Activated B cell treated with CpG ODN at 0.5 μM for 24 hours (primary cell): ENCODE measurements at regions of chr7 and their contacts with region 1.

Region 1: GRCh38 chr7:143214789-143215679 is 6.8 kb upstream of the TAS2R40 start:
- DNase-seq: no peak
- ATAC-seq: peak; percentile 97
- H3K4me3 Mint-ChIP-seq: no peak overlapping the region
- H3K27ac Mint-ChIP-seq: no peak overlapping the region
- H3K4me1 Mint-ChIP-seq: peaks cover 16% of the 10 kb centered on the region
- H3K27me3 Mint-ChIP-seq: peaks cover 2% of the 10 kb centered on the region
- CTCF ChIP-seq: peak; percentile 99

Region 2: DNA sequence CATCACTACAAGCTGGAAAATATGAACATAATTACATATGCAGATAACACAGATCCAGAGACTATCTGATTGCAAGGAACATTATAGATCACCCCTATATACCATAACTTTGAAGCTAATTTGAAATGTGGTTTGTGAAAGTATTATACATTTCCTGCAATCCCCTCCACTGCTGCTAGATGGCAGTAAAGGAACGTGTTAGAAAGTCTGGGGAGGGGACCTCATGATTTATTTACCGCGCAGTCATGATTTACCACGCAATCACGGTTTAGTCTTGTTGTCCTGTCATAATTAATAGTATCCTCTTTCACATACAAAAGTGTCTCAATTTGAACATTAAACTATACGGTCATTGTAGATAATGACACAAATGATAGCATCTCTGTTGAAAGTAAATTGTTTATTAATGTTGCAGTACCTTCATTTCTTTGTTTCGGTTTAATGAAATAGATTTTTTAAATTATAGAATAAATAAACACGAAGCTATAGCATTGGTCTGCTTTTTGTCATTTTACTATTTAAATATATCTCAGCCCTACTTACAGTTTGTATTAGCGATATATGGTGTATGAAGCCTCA is 611.1 kb before region 1 on chr7:
- CTCF ChIA-PET with region 1: interaction called, 12 read pairs
- POLR2A ChIA-PET with region 1: no interaction called
- intact Hi-C with region 1: loop called (anchors 2 kb)
- DNase-seq: no peak
- ATAC-seq: no peak
- H3K4me3 Mint-ChIP-seq: no peak overlapping the region
- H3K27ac Mint-ChIP-seq: no peak overlapping the region
- H3K4me1 Mint-ChIP-seq: peaks cover 3% of the 10 kb centered on the region
- H3K27me3 Mint-ChIP-seq: peaks cover 35% of the 10 kb centered on the region
- CTCF ChIP-seq: peak; percentile 64

Region 3: DNA sequence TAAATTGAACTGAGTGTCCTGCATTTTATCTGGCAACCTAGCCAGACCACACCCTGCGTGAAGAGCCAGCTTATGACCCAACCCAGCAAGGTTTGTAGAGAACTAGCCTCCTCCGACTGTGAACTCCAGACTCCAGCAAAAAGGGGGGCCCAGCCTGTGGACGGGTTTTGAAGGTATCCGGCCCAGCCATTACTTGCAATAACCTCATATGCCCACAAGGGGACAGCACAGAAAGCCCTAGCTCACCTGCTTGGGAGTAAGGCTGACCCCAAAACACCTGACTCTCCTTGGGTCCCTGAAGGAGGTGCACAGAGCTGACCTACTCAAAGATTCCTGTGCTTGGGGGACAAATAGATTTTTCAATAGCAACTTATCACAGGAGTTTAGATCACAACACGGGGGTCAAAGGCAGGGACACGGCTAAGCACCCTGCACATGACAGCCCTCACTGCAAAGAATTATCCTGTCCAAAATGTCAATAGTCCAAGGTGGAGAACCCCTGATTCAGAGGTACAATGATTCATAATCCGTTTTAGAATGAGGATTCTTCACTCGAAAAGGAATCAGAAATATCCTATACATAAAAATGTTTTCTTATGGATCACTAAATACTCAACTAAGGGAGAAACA is 334.0 kb before region 1 on chr7:
- CTCF ChIA-PET with region 1: interaction called, 29 read pairs
- POLR2A ChIA-PET with region 1: no interaction called
- intact Hi-C with region 1: loop called (anchors 1 kb)
- DNase-seq: no peak
- ATAC-seq: peak; percentile 79
- H3K4me3 Mint-ChIP-seq: no peak overlapping the region
- H3K27ac Mint-ChIP-seq: no peak overlapping the region
- H3K4me1 Mint-ChIP-seq: no peaks in the 10 kb centered on the region
- H3K27me3 Mint-ChIP-seq: peaks cover 15% of the 10 kb centered on the region
- CTCF ChIP-seq: peak; percentile 43

Region 4: GRCh38 chr7:142908921-142909890 is 305.8 kb before region 1 on chr7:
- CTCF ChIA-PET with region 1: interaction called, 9 read pairs
- POLR2A ChIA-PET with region 1: no interaction called
- intact Hi-C with region 1: loop called (anchors 1 kb)
- DNase-seq: no peak
- ATAC-seq: no peak
- H3K4me3 Mint-ChIP-seq: no peak overlapping the region
- H3K27ac Mint-ChIP-seq: no peak overlapping the region
- H3K4me1 Mint-ChIP-seq: no peaks in the 10 kb centered on the region
- H3K27me3 Mint-ChIP-seq: peaks cover 24% of the 10 kb centered on the region
- CTCF ChIP-seq: no peak

Region 5: DNA sequence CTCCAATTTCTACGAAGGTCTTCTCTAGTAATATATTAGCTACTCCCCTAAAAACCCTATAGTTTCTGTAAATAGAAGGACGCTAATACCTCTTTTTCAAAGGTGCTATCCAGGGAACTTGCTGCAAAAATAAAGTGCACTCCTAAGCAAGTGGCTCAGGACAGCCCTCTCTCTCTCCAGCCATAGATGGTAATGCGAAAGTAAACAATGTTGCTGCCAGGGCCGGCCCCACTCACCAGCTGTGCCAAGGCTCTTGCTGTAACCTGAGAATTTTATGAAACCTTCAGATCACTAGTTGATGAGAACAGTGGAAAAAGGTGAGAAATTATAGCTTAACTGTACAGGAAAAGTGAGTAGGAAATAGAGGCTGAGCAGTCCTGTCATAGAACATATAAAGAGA is 42.7 kb before region 1 on chr7:
- CTCF ChIA-PET with region 1: no interaction called
- POLR2A ChIA-PET with region 1: no interaction called
- intact Hi-C with region 1: no loop called
- DNase-seq: no peak
- ATAC-seq: no peak
- H3K4me3 Mint-ChIP-seq: peak overlapping the region; percentile 36
- H3K27ac Mint-ChIP-seq: no peak overlapping the region
- H3K4me1 Mint-ChIP-seq: peaks cover 27% of the 10 kb centered on the region
- H3K27me3 Mint-ChIP-seq: no peaks in the 10 kb centered on the region
- CTCF ChIP-seq: no peak

Region 6: DNA sequence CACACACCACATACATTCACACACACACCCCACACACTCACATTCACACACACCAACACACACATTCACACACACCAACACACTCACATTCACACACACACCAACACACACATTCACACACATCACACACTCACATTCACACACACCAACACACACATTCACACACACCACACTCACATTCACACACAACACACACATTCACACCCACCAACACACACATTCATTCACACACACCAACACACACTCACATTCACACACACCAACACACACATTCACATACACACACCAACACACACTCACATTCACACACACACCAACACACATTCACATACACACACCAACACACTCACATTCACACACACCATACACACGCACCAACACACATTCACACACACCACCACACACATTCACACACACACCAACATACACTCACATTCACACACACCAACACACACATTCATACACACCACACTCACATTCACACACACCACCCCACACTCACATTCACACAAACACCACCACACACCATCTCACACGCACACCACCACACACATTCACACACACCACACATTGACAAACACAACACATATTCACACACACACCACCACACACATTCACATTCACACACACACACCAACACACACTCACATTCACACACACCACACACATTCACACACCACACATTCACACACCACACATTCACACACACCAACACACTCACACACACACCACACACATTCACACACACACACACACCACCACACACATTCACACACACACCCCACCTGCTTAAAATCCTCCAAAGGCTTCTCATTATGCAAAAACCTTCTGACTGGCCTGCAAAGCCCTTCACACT is 15.8 kb after region 1 on chr7:
- CTCF ChIA-PET with region 1: interaction called, 10 read pairs
- POLR2A ChIA-PET with region 1: no interaction called
- intact Hi-C with region 1: no loop called
- DNase-seq: no peak
- ATAC-seq: no peak
- H3K4me3 Mint-ChIP-seq: no peak overlapping the region
- H3K27ac Mint-ChIP-seq: no peak overlapping the region
- H3K4me1 Mint-ChIP-seq: no peaks in the 10 kb centered on the region
- H3K27me3 Mint-ChIP-seq: no peaks in the 10 kb centered on the region
- CTCF ChIP-seq: no peak